Activated naive CD4-positive, alpha-beta T cell treated with anti-CD3 and anti-CD28 coated beads, Interleukin-2, amount 10 ng/mL, durations not matched to agents 7 days and 5 days (primary cell): ENCODE measurements at regions of chr5 and their contacts with region 1.

Region 1: DNA sequence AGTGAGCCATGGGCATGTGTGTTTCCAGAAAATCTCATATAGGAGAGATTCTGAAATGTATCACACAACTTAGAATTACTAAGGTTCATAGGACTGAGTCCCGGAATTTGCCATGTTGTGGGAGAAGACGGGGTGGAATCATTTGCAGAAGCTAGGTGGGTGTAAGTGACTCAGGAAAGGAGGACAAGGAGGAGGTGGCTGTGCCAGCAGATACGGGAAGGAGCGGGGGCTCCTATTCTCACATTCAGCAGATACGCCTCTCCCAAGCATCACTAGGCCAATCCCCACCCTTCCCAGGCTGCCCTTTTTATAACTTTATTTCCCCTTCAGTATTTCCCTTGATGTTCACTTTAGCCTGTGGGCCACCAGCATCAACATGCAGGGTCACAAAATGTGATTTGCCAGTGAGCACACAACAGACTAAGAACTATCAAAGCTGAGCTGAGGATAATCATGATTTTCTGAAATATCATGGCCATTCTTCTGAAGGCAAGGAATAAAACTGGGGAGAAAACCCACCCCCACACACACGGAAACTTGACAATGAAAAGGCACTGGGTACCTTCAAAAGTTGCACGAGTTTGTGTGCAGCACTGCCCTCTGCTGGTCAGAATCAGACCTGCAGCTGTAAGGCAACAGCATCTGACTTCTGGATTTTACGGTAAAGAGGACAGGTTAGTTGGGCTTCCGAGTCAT is 133.2 kb downstream of the MTX3 start:
- DNase-seq: peak; percentile 87
- H3K4me3 Mint-ChIP-seq: no peak overlapping the region
- H3K27ac Mint-ChIP-seq: no peak overlapping the region
- H3K4me1 Mint-ChIP-seq: no peaks in the 10 kb centered on the region
- H3K27me3 Mint-ChIP-seq: peaks cover 25% of the 10 kb centered on the region

Region 2: DNA sequence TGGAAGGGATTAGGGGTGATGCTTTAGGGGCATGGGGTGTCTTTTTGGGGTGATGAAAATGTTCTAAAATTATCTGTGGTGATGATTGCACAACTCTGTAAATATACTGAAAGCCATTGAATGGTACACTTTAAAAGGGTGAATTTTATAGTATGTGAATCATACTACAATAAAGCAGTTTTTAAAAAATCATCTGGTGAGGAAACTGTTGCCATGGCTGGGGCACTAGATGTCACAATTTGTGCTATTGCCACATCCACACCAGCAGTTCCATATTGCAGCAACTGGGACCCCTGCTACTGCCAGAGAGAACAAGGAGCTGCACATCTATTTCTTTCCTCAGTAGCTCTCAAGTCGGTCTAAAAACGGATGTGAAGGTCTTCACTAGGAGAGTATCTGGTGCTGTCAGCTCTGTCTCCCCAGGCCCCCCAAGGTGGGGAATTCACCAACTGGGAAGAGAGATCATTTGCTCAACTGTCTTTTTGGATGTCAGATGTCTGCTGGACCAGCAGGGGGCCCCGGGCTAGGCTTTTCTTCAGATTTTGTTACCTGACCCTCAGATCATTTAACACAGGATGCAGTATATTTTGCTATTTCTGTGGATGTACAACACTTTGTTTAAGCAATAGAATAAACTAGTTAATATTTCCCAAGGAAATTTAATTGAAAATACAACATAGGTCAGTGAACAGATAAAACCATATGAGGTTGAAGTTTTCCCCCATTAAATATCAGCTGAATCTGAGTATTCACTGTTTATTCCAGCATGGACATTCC is 155.1 kb before region 1 on chr5:
- CTCF ChIA-PET with region 1: interaction called, 19 read pairs
- DNase-seq: peak; percentile 66
- H3K4me3 Mint-ChIP-seq: no peak overlapping the region
- H3K27ac Mint-ChIP-seq: no peak overlapping the region
- H3K4me1 Mint-ChIP-seq: peaks cover 13% of the 10 kb centered on the region
- H3K27me3 Mint-ChIP-seq: peaks cover 8% of the 10 kb centered on the region

Region 3: GRCh38 chr5:79834754-79835714 is 22.8 kb before region 1 on chr5:
- CTCF ChIA-PET with region 1: no interaction called
- DNase-seq: no peak
- H3K4me3 Mint-ChIP-seq: no peak overlapping the region
- H3K27ac Mint-ChIP-seq: no peak overlapping the region
- H3K4me1 Mint-ChIP-seq: no peaks in the 10 kb centered on the region
- H3K27me3 Mint-ChIP-seq: peaks cover 18% of the 10 kb centered on the region